IMR-90 (cell line): ENCODE measurements at regions of chrX and their contacts with region 1.

Region 1: DNA sequence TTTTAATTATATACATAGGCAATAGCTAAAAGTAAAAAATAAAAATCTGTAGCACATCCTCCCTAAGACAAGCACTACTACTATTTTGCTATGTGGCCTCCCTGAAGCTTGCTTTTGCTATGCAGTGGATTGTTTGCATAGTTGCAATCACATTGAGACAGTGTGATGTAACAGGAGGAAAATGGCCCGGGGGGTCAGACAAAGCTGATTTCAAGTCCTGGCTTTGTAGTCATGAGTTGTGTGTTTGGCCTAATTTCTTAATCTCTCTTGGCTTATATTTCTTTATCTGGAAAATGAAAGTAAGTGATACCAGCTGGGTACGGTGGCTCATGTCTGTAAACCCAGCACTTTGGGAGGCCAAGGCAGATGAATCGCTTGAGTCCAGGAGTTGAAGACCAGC is 166.6 kb downstream of the LHFPL1 start:
- DNase-seq: peak; percentile 78
- ATAC-seq: peak; percentile 83
- H3K4me3 ChIP-seq: no peak overlapping the region
- H3K27ac ChIP-seq: no peak overlapping the region
- H3K4me1 ChIP-seq: no peaks in the 10 kb centered on the region
- H3K27me3 ChIP-seq: no peaks in the 10 kb centered on the region
- CTCF ChIP-seq: no peak
- POLR2A ChIP-seq: no peak
- RAD21 ChIP-seq: no peak

Region 2: DNA sequence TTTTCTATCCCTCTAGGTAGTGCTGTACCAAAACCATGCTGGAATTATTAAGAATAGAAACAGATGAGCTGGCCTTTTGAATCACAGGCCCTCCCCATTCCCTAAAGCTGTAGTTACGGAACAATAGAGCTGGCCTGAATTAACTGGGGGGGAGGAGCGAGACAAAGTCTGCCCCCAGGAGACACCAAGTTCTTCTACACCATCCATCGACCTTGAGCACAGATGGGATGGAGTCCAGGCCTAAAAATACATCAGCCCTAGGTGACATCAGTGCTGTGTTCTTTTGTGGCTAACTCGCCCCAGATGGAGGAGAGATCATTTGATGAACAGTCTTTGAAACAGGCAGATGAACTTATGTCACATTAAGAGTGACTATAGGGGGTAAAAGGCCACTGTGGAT is 117.0 kb after region 1 on chrX:
- CTCF ChIA-PET with region 1: no interaction called
- POLR2A ChIA-PET with region 1: no interaction called
- dilution Hi-C with region 1: no loop called
- in situ Hi-C with region 1: no loop called
- intact Hi-C with region 1: no loop called
- DNase-seq: no peak
- ATAC-seq: no peak
- H3K4me3 ChIP-seq: no peak overlapping the region
- H3K27ac ChIP-seq: no peak overlapping the region
- H3K4me1 ChIP-seq: 0 out of 2 replicates have a peak, but pooled peaks cover 2% of the 10 kb centered on the region
- H3K27me3 ChIP-seq: no peaks in the 10 kb centered on the region; the same call in 1 of the 2 replicates
- CTCF ChIP-seq: no peak
- POLR2A ChIP-seq: no peak
- RAD21 ChIP-seq: no peak

Region 3: GRCh38 chrX:112731793-112732575 is 218.8 kb after region 1 on chrX:
- CTCF ChIA-PET with region 1: no interaction called
- POLR2A ChIA-PET with region 1: no interaction called
- dilution Hi-C with region 1: no loop called
- in situ Hi-C with region 1: no loop called
- intact Hi-C with region 1: loop called (anchors 10 kb)
- DNase-seq: peak; percentile 32
- ATAC-seq: no peak
- H3K4me3 ChIP-seq: no peak overlapping the region
- H3K27ac ChIP-seq: no peak overlapping the region
- H3K4me1 ChIP-seq: no peaks in the 10 kb centered on the region
- H3K27me3 ChIP-seq: no peaks in the 10 kb centered on the region; the same call in none of the 2 replicates
- CTCF ChIP-seq: peak; percentile 49
- POLR2A ChIP-seq: no peak
- RAD21 ChIP-seq: peak; percentile 43

Region 4: GRCh38 chrX:112751078-112751477 is 237.9 kb after region 1 on chrX:
- CTCF ChIA-PET with region 1: no interaction called
- POLR2A ChIA-PET with region 1: no interaction called
- dilution Hi-C with region 1: no loop called
- in situ Hi-C with region 1: no loop called
- intact Hi-C with region 1: no loop called
- DNase-seq: no peak
- ATAC-seq: no peak
- H3K4me3 ChIP-seq: no peak overlapping the region
- H3K27ac ChIP-seq: no peak overlapping the region
- H3K4me1 ChIP-seq: no peaks in the 10 kb centered on the region
- H3K27me3 ChIP-seq: peaks cover 6% of the 10 kb centered on the region; the same call in 1 of the 2 replicates
- CTCF ChIP-seq: no peak
- POLR2A ChIP-seq: no peak
- RAD21 ChIP-seq: no peak